Mammary epithelial cell (primary cell): ENCODE measurements at regions of chr5 and their contacts with region 1.

Region 1: GRCh38 chr5:169923988-169924387 is 56.3 kb downstream of the INSYN2B start:
- DNase-seq: no peak
- H3K4me3 ChIP-seq: no peak overlapping the region
- H3K27ac ChIP-seq: no peak overlapping the region
- H3K4me1 ChIP-seq: no peaks in the 10 kb centered on the region
- H3K27me3 ChIP-seq: no peaks in the 10 kb centered on the region
- CTCF ChIP-seq: no peak

Region 2: DNA sequence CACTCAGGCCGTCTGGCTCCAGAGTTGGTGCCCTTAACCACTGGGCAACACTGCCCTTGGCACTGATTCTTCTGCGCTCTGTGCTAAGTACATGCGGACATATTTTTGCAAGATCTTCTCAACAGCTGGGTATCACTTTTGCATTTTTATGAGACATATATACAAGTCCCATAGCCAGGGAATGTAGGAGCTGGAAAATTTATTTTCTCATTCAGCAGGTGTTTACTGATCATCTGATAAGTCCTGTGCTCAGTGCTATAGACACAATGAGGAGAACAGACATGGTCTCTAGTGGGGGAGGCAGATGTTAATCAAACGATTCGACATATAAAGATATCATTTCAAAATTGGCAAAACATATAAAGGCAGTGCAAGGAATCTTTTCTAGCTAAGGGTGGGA is 93.8 kb after region 1 on chr5:
- CTCF ChIA-PET with region 1: no interaction called
- dilution Hi-C with region 1: loop called (anchors 5 kb)
- in situ Hi-C with region 1: no loop called
- intact Hi-C with region 1: no loop called
- DNase-seq: no peak
- H3K4me3 ChIP-seq: no peak overlapping the region
- H3K27ac ChIP-seq: no peak overlapping the region
- H3K4me1 ChIP-seq: no peaks in the 10 kb centered on the region
- H3K27me3 ChIP-seq: no peaks in the 10 kb centered on the region
- CTCF ChIP-seq: no peak